Naive thymus-derived CD4-positive, alpha-beta T cell (primary cell): ENCODE measurements at regions of chrX and their contacts with region 1.

Region 1: DNA sequence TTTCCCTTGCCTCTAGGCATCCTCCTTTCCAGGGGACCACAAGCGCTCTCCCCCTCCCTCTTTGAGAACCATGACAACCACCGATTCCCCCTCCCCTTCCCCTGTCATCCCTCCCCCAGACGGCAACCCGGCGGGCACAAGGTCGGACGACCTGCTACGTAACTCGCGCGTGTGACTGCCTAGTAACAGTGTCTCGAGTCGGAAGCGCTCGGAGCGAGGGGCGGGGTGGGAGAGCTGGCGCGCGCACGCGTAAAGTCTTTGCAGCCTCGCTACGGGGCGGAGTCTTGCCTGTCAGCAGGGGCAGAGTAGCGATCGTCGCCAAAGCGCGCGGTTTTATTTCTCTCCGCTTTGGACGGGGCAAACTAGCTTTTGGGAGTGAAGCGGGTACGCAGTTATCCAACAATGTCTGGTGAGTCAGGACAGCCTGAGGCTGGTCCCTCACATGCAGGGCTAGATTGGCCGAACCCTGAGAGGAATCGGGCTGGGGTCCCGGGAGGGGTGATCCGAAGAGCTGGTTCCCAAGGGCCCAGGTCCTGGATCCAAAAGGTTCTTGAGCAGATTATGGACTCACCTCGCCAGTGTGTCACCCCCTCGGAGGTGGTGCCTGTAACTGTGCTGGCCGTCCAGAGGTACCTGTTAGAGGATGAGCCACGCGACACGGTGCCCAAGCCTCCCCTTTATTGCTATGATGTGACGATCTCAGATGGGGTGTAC is at the start of gene RADX:
- DNase-seq: peak; percentile 65 to 91 (median 87)
- ATAC-seq: peak; percentile 94
- H3K4me3 ChIP-seq: peak within 1 kb of the TSS; percentile 89
- H3K4me3 Mint-ChIP-seq: peak within 1 kb of the TSS; percentile 88 to 96 (median 94)
- H3K27ac ChIP-seq: peak within 1 kb of the TSS; percentile 80
- H3K27ac Mint-ChIP-seq: peak within 1 kb of the TSS; percentile 86 to 97 (median 92)
- H3K4me1 ChIP-seq: peaks cover 0 to 3% of the 10 kb centered on the region in 2 donors
- H3K4me1 Mint-ChIP-seq: peaks cover 11 to 29% (median 24%) of the 10 kb centered on the region in 7 donors
- H3K27me3 ChIP-seq: no peaks in the 10 kb centered on the region
- H3K27me3 Mint-ChIP-seq: peaks cover 0 to 4% (median 0%) of the 10 kb centered on the region in 5 donors
- total RNA-seq, gene RADX: 8.0 to 12.7 (median 12.0) TPM

Region 2: GRCh38 chrX:106397801-106398538 is 213.9 kb before region 1 on chrX:
- CTCF ChIA-PET with region 1: no interaction called
- POLR2A ChIA-PET with region 1: no interaction called
- intact Hi-C with region 1: no loop called
- DNase-seq: no peak
- ATAC-seq: no peak
- H3K4me3 ChIP-seq: no peak overlapping the region
- H3K4me3 Mint-ChIP-seq: no peak overlapping the region
- H3K27ac ChIP-seq: no peak overlapping the region
- H3K27ac Mint-ChIP-seq: no peak overlapping the region
- H3K4me1 ChIP-seq: no peaks in the 10 kb centered on the region
- H3K4me1 Mint-ChIP-seq: no peaks in the 10 kb centered on the region
- H3K27me3 ChIP-seq: no peaks in the 10 kb centered on the region
- H3K27me3 Mint-ChIP-seq: peaks cover 0 to 7% (median 0%) of the 10 kb centered on the region in 5 donors

Region 3: GRCh38 chrX:106481341-106481740 is 130.5 kb before region 1 on chrX:
- CTCF ChIA-PET with region 1: no interaction called
- POLR2A ChIA-PET with region 1: no interaction called
- intact Hi-C with region 1: loop called in 1 of 2 experiments (anchors 1 kb)
- DNase-seq: peak in 6 of 9 donors; percentile 10 to 52 (median 24)
- ATAC-seq: no peak
- H3K4me3 ChIP-seq: no peak overlapping the region
- H3K4me3 Mint-ChIP-seq: no peak overlapping the region
- H3K27ac ChIP-seq: no peak overlapping the region
- H3K27ac Mint-ChIP-seq: no peak overlapping the region
- H3K4me1 ChIP-seq: peaks cover 0 to 4% of the 10 kb centered on the region in 2 donors
- H3K4me1 Mint-ChIP-seq: peaks cover 2 to 26% (median 14%) of the 10 kb centered on the region in 7 donors
- H3K27me3 ChIP-seq: no peaks in the 10 kb centered on the region
- H3K27me3 Mint-ChIP-seq: no peaks in the 10 kb centered on the region

Region 4: DNA sequence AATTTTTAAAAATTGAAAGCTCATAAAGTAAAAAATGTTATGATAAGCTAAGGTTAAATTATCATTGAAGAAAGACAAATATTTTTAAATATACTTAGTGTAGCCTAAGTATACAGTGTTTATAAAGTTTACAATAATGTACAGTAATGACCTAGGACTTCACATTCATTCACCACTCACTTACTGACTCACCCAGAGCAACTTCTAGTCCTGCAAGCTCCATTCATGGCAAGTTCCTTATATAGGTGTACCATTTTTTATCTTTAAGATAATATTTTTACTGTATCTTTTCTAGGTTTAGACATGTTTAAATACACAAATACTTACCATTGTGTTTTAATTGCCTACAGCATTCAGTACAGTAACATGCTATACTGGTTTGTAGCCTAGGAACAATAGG is 112.4 kb before region 1 on chrX:
- CTCF ChIA-PET with region 1: no interaction called
- POLR2A ChIA-PET with region 1: no interaction called
- intact Hi-C with region 1: loop called in 1 of 2 experiments (anchors 2 kb)
- DNase-seq: no peak
- ATAC-seq: no peak
- H3K4me3 ChIP-seq: no peak overlapping the region
- H3K4me3 Mint-ChIP-seq: no peak overlapping the region
- H3K27ac ChIP-seq: no peak overlapping the region
- H3K27ac Mint-ChIP-seq: no peak overlapping the region
- H3K4me1 ChIP-seq: peaks cover 0 to 5% of the 10 kb centered on the region in 2 donors
- H3K4me1 Mint-ChIP-seq: peaks cover 2 to 20% (median 14%) of the 10 kb centered on the region in 7 donors
- H3K27me3 ChIP-seq: no peaks in the 10 kb centered on the region
- H3K27me3 Mint-ChIP-seq: no peaks in the 10 kb centered on the region

Region 5: DNA sequence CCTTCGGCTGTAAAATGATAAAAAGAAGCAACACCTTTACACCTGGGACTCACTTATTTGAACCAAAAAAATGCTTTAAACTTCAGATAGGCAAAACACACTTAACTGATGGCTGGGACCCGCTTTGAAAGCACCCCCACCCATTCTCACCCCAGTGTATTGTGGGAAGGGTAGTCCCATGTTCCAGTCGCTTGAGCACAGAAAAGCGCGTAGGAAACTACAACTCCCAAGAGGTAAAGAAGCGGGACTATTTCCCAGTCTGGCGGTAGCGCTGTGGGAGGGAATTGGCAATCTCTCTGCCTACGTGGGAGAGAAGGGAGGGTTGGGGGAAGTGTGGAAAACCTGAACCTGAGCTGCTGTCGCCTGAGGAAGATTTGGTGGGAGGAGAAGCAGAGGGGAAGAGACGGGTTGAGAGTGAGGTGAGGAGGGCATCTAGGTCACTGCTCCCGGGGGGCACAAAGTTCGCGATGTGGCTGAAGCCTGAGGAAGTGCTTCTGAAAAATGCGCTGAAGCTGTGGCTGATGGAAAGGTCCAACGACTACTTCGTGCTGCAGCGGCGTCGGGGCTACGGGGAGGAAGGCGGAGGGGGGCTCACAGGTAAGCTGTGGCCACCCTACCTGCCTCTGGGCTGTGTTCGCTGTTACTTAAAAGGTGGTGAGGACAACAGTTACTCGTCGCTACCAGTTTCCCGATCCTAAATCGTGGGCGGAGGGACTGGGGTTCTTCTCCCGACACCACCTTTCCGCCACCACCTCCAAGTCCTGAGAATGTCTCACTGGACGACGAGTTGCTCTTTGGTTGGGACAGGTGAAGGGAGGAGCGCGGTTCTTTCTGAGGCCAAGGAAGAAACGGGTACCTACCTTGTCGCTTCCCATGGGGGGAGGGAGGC is 190.8 kb after region 1 on chrX and contains the start of gene TBC1D8B:
- CTCF ChIA-PET with region 1: no interaction called
- POLR2A ChIA-PET with region 1: no interaction called
- intact Hi-C with region 1: loop called in 1 of 2 experiments (anchors 5 kb)
- DNase-seq: peak in 6 of 9 donors; percentile 2 to 19 (median 6)
- ATAC-seq: peak; percentile 88
- H3K4me3 ChIP-seq: peak within 1 kb of the TSS; percentile 51
- H3K4me3 Mint-ChIP-seq: peak within 1 kb of the TSS; percentile 77 to 94 (median 85)
- H3K27ac ChIP-seq: no peak within 1 kb of the TSS
- H3K27ac Mint-ChIP-seq: peak within 1 kb of the TSS in 3 of 9 donors; percentile 46 to 74 (median 55)
- H3K4me1 ChIP-seq: no peaks in the 10 kb centered on the region
- H3K4me1 Mint-ChIP-seq: peaks cover 5 to 16% (median 11%) of the 10 kb centered on the region in 7 donors
- H3K27me3 ChIP-seq: peaks cover 0 to 5% of the 10 kb centered on the region in 2 donors
- H3K27me3 Mint-ChIP-seq: peaks cover 20 to 39% (median 23%) of the 10 kb centered on the region in 5 donors
- total RNA-seq, gene TBC1D8B: 0.24 to 2.1 (median 0.71) TPM

Region 6: DNA sequence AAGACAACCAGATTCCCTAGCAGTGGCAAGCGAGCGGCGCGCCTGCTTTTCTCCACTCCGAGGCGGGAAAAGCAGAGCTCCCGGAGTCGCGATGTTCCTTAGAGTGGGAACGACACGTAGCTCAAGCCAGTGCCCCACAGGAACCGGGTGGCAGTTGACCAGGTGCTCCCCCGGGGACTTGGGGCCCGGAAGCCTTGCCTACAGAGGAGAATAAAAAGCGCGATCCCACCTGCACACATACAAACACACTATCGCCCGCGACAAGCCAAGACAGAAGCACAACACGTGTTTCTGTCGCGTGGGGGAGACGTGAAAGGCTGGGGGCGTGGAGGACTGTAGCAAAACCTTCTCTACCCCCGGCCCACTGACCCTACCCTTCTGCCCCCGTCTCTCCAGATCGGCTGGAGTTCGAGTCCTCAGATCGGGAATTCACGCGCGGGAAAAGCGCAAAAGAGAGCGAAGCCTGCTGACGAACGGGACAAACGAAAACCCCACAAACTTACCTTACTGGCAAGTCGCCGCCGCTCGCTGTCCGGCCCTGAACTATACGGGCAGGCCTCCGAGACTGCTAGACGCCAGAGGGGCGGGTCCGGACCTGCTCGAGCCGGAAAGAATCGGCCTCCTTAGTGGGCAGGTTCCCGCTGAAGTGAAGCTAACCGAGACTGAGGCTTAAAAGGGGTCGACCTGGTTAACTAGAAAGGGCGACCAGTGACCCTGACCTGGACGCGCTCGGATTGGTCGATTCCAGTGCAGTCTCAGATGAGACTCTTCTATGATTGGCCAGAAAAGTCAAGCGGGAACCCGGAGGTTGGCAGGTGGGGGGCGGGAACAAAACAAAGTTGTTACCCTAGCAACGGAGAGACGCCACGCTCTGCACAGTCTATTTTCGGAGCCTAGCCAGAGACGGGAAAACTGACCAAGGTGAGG is 594.2 kb after region 1 on chrX and contains the starts of genes DNAAF6 and NUP62CL:
- CTCF ChIA-PET with region 1: no interaction called
- POLR2A ChIA-PET with region 1: no interaction called
- intact Hi-C with region 1: loop called in 1 of 2 experiments (anchors 2 kb)
- DNase-seq: peak; percentile 28 to 75 (median 61)
- ATAC-seq: peak; percentile 94
- H3K4me3 ChIP-seq: peak within 1 kb of the TSS; percentile 72
- H3K4me3 Mint-ChIP-seq: peak within 1 kb of the TSS; percentile 80 to 93 (median 90)
- H3K27ac ChIP-seq: peak within 1 kb of the TSS; percentile 57
- H3K27ac Mint-ChIP-seq: peak within 1 kb of the TSS; percentile 28 to 84 (median 74)
- H3K4me1 ChIP-seq: no peaks in the 10 kb centered on the region
- H3K4me1 Mint-ChIP-seq: peaks cover 0 to 11% (median 3%) of the 10 kb centered on the region in 7 donors
- H3K27me3 ChIP-seq: no peaks in the 10 kb centered on the region
- H3K27me3 Mint-ChIP-seq: peaks cover 0 to 2% (median 0%) of the 10 kb centered on the region in 5 donors
- total RNA-seq, gene DNAAF6: not detected
- total RNA-seq, gene NUP62CL: 0.73 to 2.1 (median 1.6) TPM

Region 7: GRCh38 chrX:107747596-107748161 is 1135.8 kb after region 1 on chrX:
- CTCF ChIA-PET with region 1: no interaction called
- POLR2A ChIA-PET with region 1: no interaction called
- intact Hi-C with region 1: loop called in 1 of 2 experiments (anchors 10 kb)
- DNase-seq: no peak
- ATAC-seq: no peak
- H3K4me3 ChIP-seq: no peak overlapping the region
- H3K4me3 Mint-ChIP-seq: no peak overlapping the region
- H3K27ac ChIP-seq: no peak overlapping the region
- H3K27ac Mint-ChIP-seq: no peak overlapping the region
- H3K4me1 ChIP-seq: peaks cover 5 to 12% of the 10 kb centered on the region in 2 donors
- H3K4me1 Mint-ChIP-seq: peaks cover under 1 to 29% (median 17%) of the 10 kb centered on the region in 7 donors
- H3K27me3 ChIP-seq: no peaks in the 10 kb centered on the region
- H3K27me3 Mint-ChIP-seq: no peaks in the 10 kb centered on the region

Region 8: GRCh38 chrX:108091266-108091877 is 1479.5 kb after region 1 on chrX and contains the starts of genes ATG4A and PSMD10:
- CTCF ChIA-PET with region 1: no interaction called
- POLR2A ChIA-PET with region 1: no interaction called
- intact Hi-C with region 1: loop called (anchors 1 to 2 kb)
- DNase-seq: peak; percentile 65 to 91 (median 85)
- ATAC-seq: peak; percentile 97
- H3K4me3 ChIP-seq: peak within 1 kb of the TSS; percentile 85
- H3K4me3 Mint-ChIP-seq: no peak within 1 kb of the TSS
- H3K27ac ChIP-seq: peak within 1 kb of the TSS; percentile 88
- H3K27ac Mint-ChIP-seq: no peak within 1 kb of the TSS
- H3K4me1 ChIP-seq: no peaks in the 10 kb centered on the region
- H3K4me1 Mint-ChIP-seq: peaks cover 0 to 28% (median 15%) of the 10 kb centered on the region in 7 donors
- H3K27me3 ChIP-seq: no peaks in the 10 kb centered on the region
- H3K27me3 Mint-ChIP-seq: no peaks in the 10 kb centered on the region
- total RNA-seq, gene ATG4A: 6.7 to 11.4 (median 7.5) TPM
- total RNA-seq, gene PSMD10: 17.6 to 36.8 (median 22.1) TPM